Naive thymus-derived CD4-positive, alpha-beta T cell (primary cell): ENCODE measurements at regions of chr6 and their contacts with region 1.

Region 1: DNA sequence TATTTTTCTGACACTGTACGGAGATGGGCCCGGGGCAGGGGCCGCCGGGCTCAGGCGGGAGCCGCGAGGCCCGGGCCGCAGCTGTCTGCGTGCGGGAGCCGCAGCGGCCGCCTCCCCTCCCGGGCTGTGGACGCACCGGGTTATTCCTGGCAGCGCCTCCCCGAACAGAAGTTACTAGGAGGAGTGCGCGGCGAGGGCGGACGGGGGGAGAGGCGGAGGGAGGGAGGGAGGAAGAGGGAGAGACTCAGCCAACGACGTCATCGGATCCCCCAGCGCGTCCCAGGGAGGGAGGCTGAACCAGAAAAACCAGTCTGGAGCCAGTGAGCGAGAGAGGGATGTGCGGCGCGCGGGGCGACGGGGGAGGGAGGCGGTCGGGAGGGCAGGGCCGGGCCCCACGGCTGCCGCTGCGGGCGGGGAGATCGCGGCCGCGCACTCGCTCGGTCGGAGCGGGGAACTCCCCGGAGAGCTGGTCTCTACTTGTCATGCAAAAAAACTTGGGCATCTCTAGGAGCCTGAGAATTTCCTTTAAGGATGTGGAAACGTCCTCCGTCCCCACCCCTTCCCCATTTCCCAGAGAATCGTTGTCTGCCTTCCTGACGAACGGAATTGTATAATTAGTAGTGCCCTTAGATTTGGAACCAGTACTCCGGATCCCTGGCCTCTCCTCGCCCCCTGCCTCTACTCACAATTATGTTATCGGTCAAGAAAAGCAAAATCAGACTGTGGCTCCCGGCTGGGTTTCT is 1.4 kb upstream of the HIVEP2 start:
- DNase-seq: peak; percentile 74 to 98 (median 87)
- ATAC-seq: peak; percentile 65
- H3K4me3 ChIP-seq: peak overlapping the region; percentile 92
- H3K4me3 Mint-ChIP-seq: peak overlapping the region; percentile 94 to 99 (median 96)
- H3K27ac ChIP-seq: peak overlapping the region; percentile 100
- H3K27ac Mint-ChIP-seq: peak overlapping the region; percentile 75 to 100 (median 98)
- H3K4me1 ChIP-seq: peaks cover 21 to 27% of the 10 kb centered on the region in 2 donors
- H3K4me1 Mint-ChIP-seq: peaks cover 30 to 44% (median 41%) of the 10 kb centered on the region in 7 donors
- H3K27me3 ChIP-seq: no peaks in the 10 kb centered on the region
- H3K27me3 Mint-ChIP-seq: peaks cover 0 to 7% (median 0%) of the 10 kb centered on the region in 5 donors

Region 2: GRCh38 chr6:142395768-142396231 is 550.6 kb before region 1 on chr6:
- CTCF ChIA-PET with region 1: no interaction called
- POLR2A ChIA-PET with region 1: no interaction called
- intact Hi-C with region 1: loop called in 1 of 2 experiments (anchors 5 kb)
- DNase-seq: peak in 7 of 9 donors; percentile 72 to 90 (median 88)
- ATAC-seq: peak; percentile 97
- H3K4me3 ChIP-seq: peak overlapping the region; percentile 30
- H3K4me3 Mint-ChIP-seq: peak overlapping the region in 9 of 10 donors; percentile 47 to 78 (median 69)
- H3K27ac ChIP-seq: peak overlapping the region; percentile 80
- H3K27ac Mint-ChIP-seq: peak overlapping the region; percentile 9 to 99 (median 97)
- H3K4me1 ChIP-seq: peaks cover 9 to 33% of the 10 kb centered on the region in 2 donors
- H3K4me1 Mint-ChIP-seq: peaks cover 10 to 76% (median 61%) of the 10 kb centered on the region in 7 donors
- H3K27me3 ChIP-seq: no peaks in the 10 kb centered on the region
- H3K27me3 Mint-ChIP-seq: peaks cover 0 to 58% (median 0%) of the 10 kb centered on the region in 5 donors

Region 3: DNA sequence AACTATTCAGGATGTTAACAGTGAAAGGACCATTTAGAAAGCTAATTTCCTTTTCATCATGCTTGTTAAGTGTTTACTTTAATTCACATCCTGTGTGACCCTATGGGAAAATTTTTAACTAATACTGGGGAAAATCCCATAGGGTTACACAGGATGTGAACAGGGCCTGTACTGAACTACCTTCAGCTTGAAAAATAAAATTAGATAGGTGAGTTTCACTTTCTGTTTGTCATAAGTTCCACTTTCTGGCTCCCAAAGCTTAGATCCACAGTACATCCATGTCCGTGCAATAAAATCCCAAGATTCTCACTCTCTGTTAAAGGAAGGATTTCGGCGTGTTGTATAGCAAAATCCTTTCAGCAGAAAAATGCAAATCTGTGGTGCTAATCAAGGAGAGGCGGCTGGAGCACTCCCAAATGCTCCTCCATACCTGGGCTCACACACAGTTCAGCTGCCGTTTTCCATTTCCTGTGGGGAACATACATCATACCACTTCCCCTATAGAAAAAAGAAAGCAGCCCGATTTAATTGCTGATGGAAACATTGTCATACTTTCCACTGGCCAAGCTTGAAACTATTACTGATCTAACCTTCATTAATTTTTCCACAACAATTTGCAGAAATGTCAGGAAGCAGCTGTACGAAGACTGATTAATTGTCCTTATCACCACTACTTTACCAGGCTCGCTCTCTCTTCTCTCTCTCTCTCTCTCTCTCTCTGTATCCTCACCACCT is 126.6 kb before region 1 on chr6:
- CTCF ChIA-PET with region 1: interaction called, 3 read pairs
- POLR2A ChIA-PET with region 1: interaction called, 4 read pairs
- intact Hi-C with region 1: loop called in 1 of 2 experiments (anchors 1 kb)
- DNase-seq: peak in 6 of 9 donors; percentile 27 to 80 (median 44)
- ATAC-seq: peak; percentile 75
- H3K4me3 ChIP-seq: peak overlapping the region; percentile 66
- H3K4me3 Mint-ChIP-seq: peak overlapping the region; percentile 72 to 93 (median 89)
- H3K27ac ChIP-seq: peak overlapping the region; percentile 82
- H3K27ac Mint-ChIP-seq: peak overlapping the region; percentile 68 to 99 (median 92)
- H3K4me1 ChIP-seq: peaks cover 59 to 67% of the 10 kb centered on the region in 2 donors
- H3K4me1 Mint-ChIP-seq: peaks cover 52 to 95% (median 83%) of the 10 kb centered on the region in 7 donors
- H3K27me3 ChIP-seq: no peaks in the 10 kb centered on the region
- H3K27me3 Mint-ChIP-seq: no peaks in the 10 kb centered on the region

Region 4: DNA sequence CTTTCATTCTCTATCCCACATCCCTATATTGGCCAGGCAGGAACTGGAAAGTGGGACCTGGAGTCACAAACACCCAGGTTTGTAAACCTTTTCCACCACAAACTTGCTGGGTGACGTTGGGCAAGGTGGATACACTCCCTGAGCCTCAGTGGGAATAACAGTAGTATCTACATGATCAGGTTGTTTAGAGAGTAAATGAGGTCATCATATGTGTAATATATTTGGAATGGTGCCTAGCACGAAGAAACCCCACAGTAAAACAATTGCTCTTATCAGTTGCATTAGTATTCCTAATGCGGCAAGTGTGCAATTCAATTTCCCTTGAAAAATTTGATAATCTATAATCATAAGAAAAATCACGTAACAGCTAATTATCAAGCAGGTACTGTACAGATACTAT is 53.3 kb before region 1 on chr6:
- CTCF ChIA-PET with region 1: no interaction called
- POLR2A ChIA-PET with region 1: interaction called, 10 read pairs
- intact Hi-C with region 1: no loop called
- DNase-seq: no peak
- ATAC-seq: no peak
- H3K4me3 ChIP-seq: no peak overlapping the region
- H3K4me3 Mint-ChIP-seq: peak overlapping the region in 1 of 10 donors; percentile 61
- H3K27ac ChIP-seq: no peak overlapping the region
- H3K27ac Mint-ChIP-seq: peak overlapping the region in 5 of 9 donors; percentile 32 to 87 (median 48)
- H3K4me1 ChIP-seq: peaks cover 0 to 43% of the 10 kb centered on the region in 2 donors
- H3K4me1 Mint-ChIP-seq: peaks cover 22 to 68% (median 55%) of the 10 kb centered on the region in 7 donors
- H3K27me3 ChIP-seq: no peaks in the 10 kb centered on the region
- H3K27me3 Mint-ChIP-seq: no peaks in the 10 kb centered on the region

Region 5: GRCh38 chr6:142935553-142936517 is 10.5 kb before region 1 on chr6:
- CTCF ChIA-PET with region 1: interaction called, 4 read pairs
- POLR2A ChIA-PET with region 1: interaction called, 203 read pairs
- intact Hi-C with region 1: loop called (anchors 1 kb)
- DNase-seq: no peak
- ATAC-seq: peak; percentile 60
- H3K4me3 ChIP-seq: peak overlapping the region; percentile 21
- H3K4me3 Mint-ChIP-seq: peak overlapping the region; percentile 71 to 98 (median 82)
- H3K27ac ChIP-seq: peak overlapping the region; percentile 59
- H3K27ac Mint-ChIP-seq: peak overlapping the region; percentile 49 to 100 (median 86)
- H3K4me1 ChIP-seq: peaks cover 68 to 84% of the 10 kb centered on the region in 2 donors
- H3K4me1 Mint-ChIP-seq: peaks cover 54 to 99% (median 97%) of the 10 kb centered on the region in 7 donors
- H3K27me3 ChIP-seq: no peaks in the 10 kb centered on the region
- H3K27me3 Mint-ChIP-seq: no peaks in the 10 kb centered on the region

Region 6: DNA sequence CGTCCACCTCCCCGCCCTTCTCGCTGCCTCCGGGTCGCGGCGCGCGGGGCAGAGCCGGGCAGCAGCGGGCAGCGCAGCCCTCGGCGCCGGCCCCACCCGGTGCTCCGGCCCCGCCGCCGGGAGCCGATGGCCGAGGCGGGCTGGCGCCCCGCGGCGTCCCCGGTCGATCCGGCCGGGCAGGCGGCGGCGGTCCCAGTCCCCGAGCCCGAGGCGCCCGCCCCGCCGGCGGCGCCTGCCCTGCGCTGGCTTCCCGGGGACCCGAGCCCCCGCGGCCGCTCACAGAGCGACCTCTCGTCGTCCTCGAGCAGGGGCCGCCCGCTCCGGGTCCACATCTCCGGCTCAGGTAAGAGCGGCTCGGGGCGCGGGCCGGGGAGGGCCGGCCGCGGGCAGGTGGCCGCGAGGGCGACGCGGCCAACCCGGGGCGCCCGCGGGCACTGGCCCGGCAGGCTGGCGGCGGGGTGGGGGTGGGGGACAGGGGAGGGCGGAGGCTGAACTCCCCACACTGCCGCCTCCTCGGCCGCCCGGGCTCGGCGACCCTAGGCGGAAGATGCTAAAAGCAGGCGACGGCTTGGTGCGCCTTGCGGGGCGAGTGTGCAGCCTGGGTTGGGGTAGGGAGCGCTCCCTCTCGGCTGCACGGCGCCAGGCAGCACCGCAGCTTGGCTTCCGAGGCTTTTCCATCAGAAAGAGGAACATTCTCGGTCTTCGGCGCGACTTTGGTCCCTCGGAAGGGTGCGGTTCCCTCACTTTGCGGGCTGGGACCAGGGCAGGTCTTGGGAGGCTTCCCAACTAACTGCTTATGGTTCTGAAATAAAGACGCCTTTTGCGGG is 590.7 kb after region 1 on chr6:
- CTCF ChIA-PET with region 1: no interaction called
- POLR2A ChIA-PET with region 1: no interaction called
- intact Hi-C with region 1: loop called in 1 of 2 experiments (anchors 10 kb)
- DNase-seq: peak; percentile 37 to 69 (median 57)
- ATAC-seq: peak; percentile 83
- H3K4me3 ChIP-seq: peak overlapping the region; percentile 74
- H3K4me3 Mint-ChIP-seq: peak overlapping the region; percentile 81 to 92 (median 84)
- H3K27ac ChIP-seq: peak overlapping the region; percentile 60
- H3K27ac Mint-ChIP-seq: peak overlapping the region in 7 of 9 donors; percentile 59 to 89 (median 76)
- H3K4me1 ChIP-seq: peaks cover 27 to 28% of the 10 kb centered on the region in 2 donors
- H3K4me1 Mint-ChIP-seq: peaks cover 17 to 47% (median 37%) of the 10 kb centered on the region in 7 donors
- H3K27me3 ChIP-seq: no peaks in the 10 kb centered on the region
- H3K27me3 Mint-ChIP-seq: no peaks in the 10 kb centered on the region

Region 7: GRCh38 chr6:144215932-144216667 is 1269.7 kb after region 1 on chr6:
- CTCF ChIA-PET with region 1: no interaction called
- POLR2A ChIA-PET with region 1: no interaction called
- intact Hi-C with region 1: loop called in 1 of 2 experiments (anchors 5 kb)
- DNase-seq: peak; percentile 84 to 96 (median 94)
- ATAC-seq: peak; percentile 91
- H3K4me3 ChIP-seq: peak overlapping the region; percentile 73
- H3K4me3 Mint-ChIP-seq: peak overlapping the region; percentile 84 to 99 (median 97)
- H3K27ac ChIP-seq: peak overlapping the region; percentile 86
- H3K27ac Mint-ChIP-seq: peak overlapping the region; percentile 91 to 100 (median 100)
- H3K4me1 ChIP-seq: peaks cover 15 to 18% of the 10 kb centered on the region in 2 donors
- H3K4me1 Mint-ChIP-seq: peaks cover 12 to 48% (median 40%) of the 10 kb centered on the region in 7 donors
- H3K27me3 ChIP-seq: no peaks in the 10 kb centered on the region
- H3K27me3 Mint-ChIP-seq: peaks cover 0 to 12% (median 0%) of the 10 kb centered on the region in 5 donors